ENCODE measurements at regions of chr17 and their contacts with region 1.

Region 1: GRCh38 chr17:76458580-76459490 is 5.9 kb upstream of the UBE2O start:
- DNase-seq: peak; percentile 78 to 91
- ATAC-seq: peak; percentile 91 to 95
- H3K4me3 ChIP-seq: no peak overlapping the region
- H3K27ac ChIP-seq: no peak overlapping the region; a peak in 1 of 6 replicates
- H3K4me1 ChIP-seq: no peaks in the 10 kb centered on the region
- CTCF ChIP-seq: peak; percentile 76
- EP300 ChIP-seq: no peak
- POLR2A ChIP-seq: no peak
- RAD21 ChIP-seq: peak; percentile 82 to 89

Region 2: DNA sequence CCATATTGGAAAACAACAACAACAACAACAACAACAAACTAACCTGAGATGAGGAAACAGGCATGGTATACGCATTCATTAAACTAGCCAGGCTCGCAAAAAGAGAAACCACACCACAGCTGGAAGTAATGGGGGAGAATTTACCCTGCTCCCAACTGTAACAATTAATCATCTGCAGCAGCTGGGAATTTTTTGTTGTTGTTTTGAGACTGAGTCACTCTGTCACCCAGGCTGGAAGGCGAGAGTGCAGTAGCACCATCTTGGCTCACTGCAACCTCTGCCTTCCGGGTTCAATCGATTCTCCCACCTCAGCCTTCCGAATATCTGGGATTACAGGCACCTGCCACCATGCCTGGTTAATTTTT is 121.4 kb before region 1 on chr17:
- CTCF ChIA-PET with region 1: interaction called, 10 read pairs
- POLR2A ChIA-PET with region 1: no interaction called
- DNase-seq: no peak
- ATAC-seq: no peak
- H3K4me3 ChIP-seq: no peak overlapping the region
- H3K27ac ChIP-seq: no peak overlapping the region
- H3K4me1 ChIP-seq: no peaks in the 10 kb centered on the region
- CTCF ChIP-seq: no peak
- EP300 ChIP-seq: no peak
- POLR2A ChIP-seq: no peak
- RAD21 ChIP-seq: no peak

Region 3: DNA sequence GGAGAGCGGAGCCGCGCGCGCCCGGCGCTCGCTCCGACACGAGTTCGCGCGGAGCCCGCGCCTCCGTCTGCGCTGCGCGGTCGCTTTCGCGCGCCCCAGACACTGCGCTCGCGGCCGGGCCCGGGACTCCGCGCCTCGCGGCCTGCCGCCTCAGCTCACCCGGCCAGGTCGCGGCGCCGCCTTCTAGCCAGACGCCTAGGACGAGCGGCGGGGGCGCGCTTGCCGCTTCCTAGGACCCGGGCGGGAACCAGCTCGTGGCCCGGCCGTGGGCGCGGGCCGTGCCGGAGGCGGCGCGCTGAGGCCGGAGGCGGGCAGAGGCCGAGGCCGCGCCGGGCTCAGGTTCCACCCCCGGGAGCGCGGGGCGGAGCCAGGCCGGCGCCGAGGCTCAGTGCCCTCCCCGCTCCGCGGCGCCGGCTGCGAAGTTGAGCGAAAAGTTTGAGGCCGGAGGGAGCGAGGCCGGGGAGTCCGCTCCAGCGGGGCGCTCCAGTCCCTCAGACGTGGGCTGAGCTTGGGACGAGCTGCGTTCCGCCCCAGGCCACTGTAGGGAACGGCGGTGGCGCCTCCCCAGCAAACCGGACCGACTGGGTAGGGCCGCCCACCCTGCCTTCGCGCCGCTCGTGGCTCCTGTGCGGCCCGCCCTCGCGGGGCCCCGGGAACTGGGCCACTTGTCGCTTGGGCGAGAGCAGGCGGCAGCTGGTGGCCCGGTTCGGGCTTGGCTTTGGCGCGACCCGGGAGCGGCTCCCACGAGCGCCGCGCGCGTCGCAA is 74.4 kb before region 1 on chr17 and contains the start of gene SPHK1:
- CTCF ChIA-PET with region 1: interaction called, 46 read pairs
- POLR2A ChIA-PET with region 1: no interaction called
- DNase-seq: peak; percentile 84 to 90
- ATAC-seq: peak; percentile 57 to 69
- H3K4me3 ChIP-seq: peak within 1 kb of the TSS; percentile 62
- H3K27ac ChIP-seq: peak within 1 kb of the TSS; percentile 71 to 88
- H3K4me1 ChIP-seq: peaks cover 20% of the 10 kb centered on the region
- CTCF ChIP-seq: no peak; the same call in 2 of the 3 replicates
- EP300 ChIP-seq: no peak
- POLR2A ChIP-seq: peak; percentile 55; the same call in 1 of the 2 replicates
- RAD21 ChIP-seq: no peak
- polyA plus RNA-seq, gene SPHK1: 4.6 and 4.7 TPM in 2 replicates

Region 4: GRCh38 chr17:76427501-76428231 is 31.2 kb before region 1 on chr17:
- CTCF ChIA-PET with region 1: interaction called, 30 read pairs
- POLR2A ChIA-PET with region 1: no interaction called
- DNase-seq: no peak
- ATAC-seq: peak; percentile 9 to 48; a peak in 3 of 6 replicates
- H3K4me3 ChIP-seq: no peak overlapping the region
- H3K27ac ChIP-seq: peak overlapping the region in 1 of 2 experiments; percentile 1; a peak in 1 of 6 replicates
- H3K4me1 ChIP-seq: peaks cover 12% of the 10 kb centered on the region
- CTCF ChIP-seq: no peak
- EP300 ChIP-seq: no peak
- POLR2A ChIP-seq: no peak
- RAD21 ChIP-seq: no peak

Region 5: GRCh38 chr17:76547184-76547641 is 88.4 kb after region 1 on chr17:
- CTCF ChIA-PET with region 1: interaction called, 18 read pairs
- POLR2A ChIA-PET with region 1: no interaction called
- DNase-seq: peak; percentile 72 to 74
- ATAC-seq: peak; percentile 66 to 89
- H3K4me3 ChIP-seq: no peak overlapping the region
- H3K27ac ChIP-seq: peak overlapping the region in 1 of 2 experiments; percentile 49; a peak in 4 of 6 replicates
- H3K4me1 ChIP-seq: peaks cover 36% of the 10 kb centered on the region
- CTCF ChIP-seq: peak; percentile 80
- EP300 ChIP-seq: no peak
- POLR2A ChIP-seq: no peak
- RAD21 ChIP-seq: peak; percentile 86 to 95

Measured in A549 (cell line).